ENCODE measurements at regions of chr14 and their contacts with region 1.

Region 1: GRCh38 chr14:45267071-45267470 is 14.1 kb upstream of the MIS18BP1 start:
- DNase-seq: no peak
- H3K27ac ChIP-seq: no peak overlapping the region
- CTCF ChIP-seq: no peak

Region 2: DNA sequence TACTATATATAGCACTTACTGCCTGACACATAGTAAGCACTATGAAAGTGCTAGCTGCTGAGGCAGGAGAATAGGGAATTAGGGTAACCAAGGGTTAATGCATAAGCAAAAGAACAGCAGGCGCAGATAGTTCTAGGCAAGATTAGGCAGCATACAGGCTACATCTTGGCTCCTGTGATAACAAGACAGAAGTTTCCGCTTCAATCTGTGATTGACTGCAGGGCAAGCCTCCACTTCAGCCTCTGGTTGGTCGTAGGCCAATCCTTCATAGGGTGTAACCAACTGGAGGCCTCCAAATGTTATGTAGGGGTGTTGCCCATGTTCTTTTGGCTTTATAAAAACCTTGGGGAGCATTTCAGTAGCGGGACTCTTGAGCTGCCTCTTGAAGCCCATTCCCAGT is 352.2 kb before region 1 on chr14:
- CTCF ChIA-PET with region 1: interaction called, 33 read pairs
- POLR2A ChIA-PET with region 1: no interaction called
- DNase-seq: no peak
- H3K27ac ChIP-seq: no peak overlapping the region
- CTCF ChIP-seq: no peak

Region 3: DNA sequence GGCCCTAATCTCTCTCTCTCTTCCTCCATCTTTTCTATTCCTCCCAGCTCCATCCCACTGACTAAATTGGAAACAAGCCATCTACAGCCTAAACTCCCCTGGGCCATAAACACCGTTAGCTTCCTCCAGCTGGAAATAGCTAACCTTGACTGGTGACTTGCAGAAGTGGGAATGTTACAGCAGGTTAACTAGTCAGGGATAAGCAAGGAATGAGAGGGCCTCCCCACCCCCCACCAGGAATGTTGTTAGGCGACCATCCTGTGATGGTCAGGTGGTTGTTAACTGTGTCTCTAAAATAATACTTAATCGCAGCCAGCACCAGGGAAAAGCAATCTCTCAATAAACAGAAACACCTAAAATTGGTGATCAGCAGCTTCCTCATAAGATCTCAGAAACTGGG is 54.8 kb before region 1 on chr14:
- CTCF ChIA-PET with region 1: no interaction called
- POLR2A ChIA-PET with region 1: no interaction called
- DNase-seq: no peak
- H3K27ac ChIP-seq: no peak overlapping the region
- CTCF ChIP-seq: no peak

Region 4: GRCh38 chr14:45757655-45758054 is 490.6 kb after region 1 on chr14:
- CTCF ChIA-PET with region 1: interaction called, 10 read pairs
- POLR2A ChIA-PET with region 1: no interaction called
- DNase-seq: no peak
- H3K27ac ChIP-seq: no peak overlapping the region
- CTCF ChIP-seq: no peak

Measured in RWPE1 (cell line).